ENCODE measurements at regions of chr20 and their contacts with region 1.

Region 1: DNA sequence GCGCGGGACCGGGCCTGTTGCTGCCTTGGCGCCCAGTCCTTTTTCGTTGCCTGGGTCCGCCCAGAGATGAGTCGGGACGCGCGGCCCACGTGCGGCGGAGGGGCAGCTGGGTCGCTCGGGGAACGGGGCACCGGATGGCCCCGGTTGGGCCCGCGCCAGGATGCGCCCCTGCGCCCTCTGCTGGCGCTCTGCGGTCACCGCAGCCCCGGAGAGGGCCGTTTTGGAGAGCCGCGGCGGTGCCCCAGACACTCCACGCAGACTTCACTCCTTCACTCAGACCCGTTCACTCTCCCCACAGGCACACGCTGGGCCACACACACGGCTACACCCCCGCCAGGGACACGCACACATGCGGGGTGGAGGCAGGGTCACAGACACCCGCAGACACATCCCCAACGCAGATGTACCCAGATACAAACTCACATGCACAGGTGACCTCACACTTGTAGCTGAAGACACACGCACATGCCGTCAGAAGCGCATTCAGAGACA is 38.8 kb downstream of the SRC start:
- DNase-seq: peak; percentile 62
- ATAC-seq: peak; percentile 14; the same call in 1 of the 2 replicates
- H3K4me3 ChIP-seq: no peak overlapping the region
- H3K27ac ChIP-seq: no peak overlapping the region
- H3K4me1 ChIP-seq: peaks cover 28% of the 10 kb centered on the region
- H3K27me3 ChIP-seq: no peaks in the 10 kb centered on the region
- CTCF ChIP-seq: peak; percentile 82

Region 2: GRCh38 chr20:37270576-37271420 is 113.9 kb before region 1 on chr20:
- CTCF ChIA-PET with region 1: interaction called, 4 read pairs
- POLR2A ChIA-PET with region 1: no interaction called
- intact Hi-C with region 1: loop called (anchors 1 kb)
- DNase-seq: no peak
- ATAC-seq: no peak
- H3K4me3 ChIP-seq: no peak overlapping the region
- H3K27ac ChIP-seq: no peak overlapping the region
- H3K4me1 ChIP-seq: peaks cover 13% of the 10 kb centered on the region
- H3K27me3 ChIP-seq: no peaks in the 10 kb centered on the region
- CTCF ChIP-seq: no peak

Region 3: DNA sequence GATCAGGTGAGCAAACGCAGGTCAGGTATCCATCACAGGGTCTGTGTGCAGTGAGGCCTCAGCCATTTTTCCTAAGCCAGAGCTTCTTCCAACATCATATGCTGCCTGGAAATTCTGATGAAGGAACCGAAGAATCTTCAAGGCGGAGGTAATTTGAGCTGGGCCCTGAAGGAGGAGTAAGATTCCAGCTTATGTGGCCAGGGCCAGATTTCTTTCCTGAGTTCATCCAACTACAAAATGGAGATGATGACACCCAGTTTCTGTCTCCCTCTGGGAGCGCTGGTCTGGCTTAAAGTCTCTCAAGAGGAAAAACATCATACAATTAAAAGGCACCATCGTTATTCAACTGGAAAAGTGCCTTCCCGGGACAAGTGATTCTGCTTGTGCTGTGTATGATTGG is 102.2 kb before region 1 on chr20:
- CTCF ChIA-PET with region 1: interaction called, 5 read pairs
- POLR2A ChIA-PET with region 1: no interaction called
- intact Hi-C with region 1: loop called (anchors 5 kb)
- DNase-seq: peak; percentile 40
- ATAC-seq: peak; percentile 76
- H3K4me3 ChIP-seq: no peak overlapping the region
- H3K27ac ChIP-seq: no peak overlapping the region
- H3K4me1 ChIP-seq: no peaks in the 10 kb centered on the region
- H3K27me3 ChIP-seq: no peaks in the 10 kb centered on the region
- CTCF ChIP-seq: peak; percentile 61

Region 4: GRCh38 chr20:37295001-37295400 is 89.7 kb before region 1 on chr20:
- CTCF ChIA-PET with region 1: interaction called, 8 read pairs
- POLR2A ChIA-PET with region 1: no interaction called
- intact Hi-C with region 1: loop called (anchors 2 kb)
- DNase-seq: peak; percentile 99
- ATAC-seq: peak; percentile 98
- H3K4me3 ChIP-seq: peak overlapping the region; percentile 27
- H3K27ac ChIP-seq: peak overlapping the region; percentile 84
- H3K4me1 ChIP-seq: peaks cover 55% of the 10 kb centered on the region
- H3K27me3 ChIP-seq: no peaks in the 10 kb centered on the region
- CTCF ChIP-seq: no peak

Region 5: GRCh38 chr20:37345339-37346230 is 39.1 kb before region 1 on chr20 and contains the start of gene SRC:
- CTCF ChIA-PET with region 1: interaction called, 8 read pairs
- POLR2A ChIA-PET with region 1: interaction called, 3 read pairs
- intact Hi-C with region 1: loop called (anchors 5 kb)
- DNase-seq: peak; percentile 73
- ATAC-seq: peak; percentile 56
- H3K4me3 ChIP-seq: peak within 1 kb of the TSS; percentile 70
- H3K27ac ChIP-seq: peak within 1 kb of the TSS; percentile 27; the same call in 1 of the 2 replicates
- H3K4me1 ChIP-seq: peaks cover 35% of the 10 kb centered on the region
- H3K27me3 ChIP-seq: no peaks in the 10 kb centered on the region
- CTCF ChIP-seq: no peak
- total RNA-seq, gene SRC: 55.6 and 82.1 TPM in 2 replicates

Region 6: DNA sequence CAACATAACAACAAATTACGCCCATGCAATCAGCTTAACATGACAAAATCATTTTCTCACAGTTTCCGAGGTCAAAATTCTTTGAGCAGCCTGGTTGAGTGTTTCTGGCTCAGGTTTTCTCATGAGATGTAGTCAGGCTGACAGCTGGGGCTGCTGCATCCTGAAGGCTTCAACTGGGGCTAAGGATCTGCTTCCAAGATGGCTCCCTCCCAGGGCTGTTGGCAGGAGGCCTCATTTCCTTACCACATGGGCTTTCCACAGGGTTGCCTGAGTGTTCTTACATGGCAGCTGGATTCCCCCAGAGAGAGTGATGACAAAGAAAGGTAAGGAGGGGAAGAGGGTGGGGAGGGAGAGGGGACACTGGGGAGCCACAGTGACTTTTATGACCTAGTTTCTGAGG is 73.2 kb after region 1 on chr20:
- CTCF ChIA-PET with region 1: no interaction called
- POLR2A ChIA-PET with region 1: no interaction called
- intact Hi-C with region 1: no loop called
- DNase-seq: no peak
- ATAC-seq: no peak
- H3K4me3 ChIP-seq: no peak overlapping the region
- H3K27ac ChIP-seq: no peak overlapping the region
- H3K4me1 ChIP-seq: no peaks in the 10 kb centered on the region
- H3K27me3 ChIP-seq: 0 out of 2 replicates have a peak, but pooled peaks cover 3% of the 10 kb centered on the region
- CTCF ChIP-seq: no peak

Region 7: DNA sequence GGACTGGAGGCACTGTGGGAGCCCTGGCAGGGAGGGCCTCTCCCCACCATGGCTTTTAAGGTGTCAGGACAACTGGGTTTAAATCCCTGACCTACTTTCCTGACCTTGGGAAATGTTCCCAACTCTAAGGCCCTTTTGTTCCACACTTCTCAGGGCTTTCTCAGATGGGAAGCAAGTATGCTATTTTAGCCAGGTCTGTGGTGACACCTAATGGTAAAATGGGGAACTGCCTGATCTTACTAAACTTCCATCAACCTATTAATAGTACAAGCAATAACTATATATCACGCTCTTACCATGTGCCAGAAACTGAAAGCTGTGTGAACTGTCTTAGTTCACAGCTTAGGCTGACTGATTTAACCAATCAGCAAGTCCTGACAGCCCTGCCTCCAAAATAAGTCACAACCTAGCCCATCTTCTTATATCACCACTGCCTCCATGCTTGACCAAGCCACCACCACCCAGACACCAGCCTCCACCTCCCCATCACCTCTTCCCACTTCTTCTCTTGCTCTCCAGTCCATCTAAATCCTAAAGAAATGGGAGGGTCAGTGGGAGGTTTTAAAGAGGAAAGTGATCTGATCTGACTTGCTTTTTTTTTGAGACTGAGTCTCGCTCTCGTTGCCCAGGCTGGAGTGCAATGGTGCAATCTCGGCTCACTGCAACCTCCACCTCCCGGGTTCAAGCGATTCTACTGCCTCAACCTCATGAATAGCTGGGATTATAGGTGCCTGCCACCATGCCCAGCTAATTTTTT is 149.8 kb after region 1 on chr20:
- CTCF ChIA-PET with region 1: interaction called, 8 read pairs
- POLR2A ChIA-PET with region 1: no interaction called
- intact Hi-C with region 1: loop called (anchors 2 kb)
- DNase-seq: peak; percentile 96
- ATAC-seq: peak; percentile 67
- H3K4me3 ChIP-seq: no peak overlapping the region
- H3K27ac ChIP-seq: no peak overlapping the region
- H3K4me1 ChIP-seq: peaks cover 27% of the 10 kb centered on the region
- H3K27me3 ChIP-seq: no peaks in the 10 kb centered on the region
- CTCF ChIP-seq: peak; percentile 91